ENCODE measurements at regions of chr18 and their contacts with region 1.

Region 1: GRCh38 chr18:4146797-4147196 is 308.3 kb downstream of the DLGAP1 start:
- DNase-seq: no peak
- ATAC-seq: no peak
- H3K4me3 ChIP-seq: no peak overlapping the region
- H3K27ac ChIP-seq: no peak overlapping the region
- H3K4me1 ChIP-seq: no peaks in the 10 kb centered on the region
- H3K27me3 ChIP-seq: no peaks in the 10 kb centered on the region
- CTCF ChIP-seq: no peak

Region 2: DNA sequence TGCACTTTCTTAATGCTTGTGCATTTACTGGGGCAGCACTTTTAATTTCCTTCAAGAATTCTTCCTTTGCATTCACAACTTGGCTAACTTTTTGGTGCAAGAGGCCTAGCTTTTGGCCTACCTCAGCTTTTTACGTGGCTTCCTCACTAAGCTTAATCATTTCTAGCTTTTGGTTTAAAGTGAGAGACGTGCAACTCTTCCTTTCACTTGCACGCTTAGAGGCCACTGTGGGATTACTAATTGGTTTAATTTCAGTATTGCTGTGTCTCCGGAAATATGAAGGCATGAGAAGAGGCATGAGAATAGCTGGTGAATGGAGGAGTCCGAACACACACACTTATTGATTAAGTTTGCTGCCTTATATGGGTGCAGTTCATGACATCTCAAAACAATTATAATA is 45.8 kb before region 1 on chr18:
- CTCF ChIA-PET with region 1: no interaction called
- POLR2A ChIA-PET with region 1: no interaction called
- in situ Hi-C with region 1: no loop called
- intact Hi-C with region 1: loop called (anchors 5 kb)
- DNase-seq: no peak
- ATAC-seq: no peak
- H3K4me3 ChIP-seq: no peak overlapping the region
- H3K27ac ChIP-seq: no peak overlapping the region
- H3K4me1 ChIP-seq: no peaks in the 10 kb centered on the region
- H3K27me3 ChIP-seq: no peaks in the 10 kb centered on the region
- CTCF ChIP-seq: no peak

Measured in Panc1 (cell line).